ENCODE measurements at regions of chr10 and their contacts with region 1.

Region 1: GRCh38 chr10:19412531-19412930 is 363.9 kb downstream of the MALRD1 start:
- DNase-seq: peak; percentile 31
- H3K4me3 ChIP-seq: no peak overlapping the region
- H3K27ac ChIP-seq: no peak overlapping the region
- H3K4me1 ChIP-seq: no peaks in the 10 kb centered on the region
- H3K27me3 ChIP-seq: no peaks in the 10 kb centered on the region
- CTCF ChIP-seq: peak in 3 of 4 experiments; percentile 48 to 64 (median 57)
- POLR2A ChIP-seq: no peak

Region 2: GRCh38 chr10:20768843-20769242 is 1356.3 kb after region 1 on chr10:
- intact Hi-C with region 1: loop called (anchors 5 kb)
- DNase-seq: no peak
- H3K4me3 ChIP-seq: no peak overlapping the region
- H3K27ac ChIP-seq: no peak overlapping the region
- H3K4me1 ChIP-seq: no peaks in the 10 kb centered on the region
- H3K27me3 ChIP-seq: no peaks in the 10 kb centered on the region
- CTCF ChIP-seq: peak in 3 of 4 experiments; percentile 11 to 45 (median 44)
- POLR2A ChIP-seq: no peak